ENCODE measurements at regions of chr20 and their contacts with region 1.

Region 1: DNA sequence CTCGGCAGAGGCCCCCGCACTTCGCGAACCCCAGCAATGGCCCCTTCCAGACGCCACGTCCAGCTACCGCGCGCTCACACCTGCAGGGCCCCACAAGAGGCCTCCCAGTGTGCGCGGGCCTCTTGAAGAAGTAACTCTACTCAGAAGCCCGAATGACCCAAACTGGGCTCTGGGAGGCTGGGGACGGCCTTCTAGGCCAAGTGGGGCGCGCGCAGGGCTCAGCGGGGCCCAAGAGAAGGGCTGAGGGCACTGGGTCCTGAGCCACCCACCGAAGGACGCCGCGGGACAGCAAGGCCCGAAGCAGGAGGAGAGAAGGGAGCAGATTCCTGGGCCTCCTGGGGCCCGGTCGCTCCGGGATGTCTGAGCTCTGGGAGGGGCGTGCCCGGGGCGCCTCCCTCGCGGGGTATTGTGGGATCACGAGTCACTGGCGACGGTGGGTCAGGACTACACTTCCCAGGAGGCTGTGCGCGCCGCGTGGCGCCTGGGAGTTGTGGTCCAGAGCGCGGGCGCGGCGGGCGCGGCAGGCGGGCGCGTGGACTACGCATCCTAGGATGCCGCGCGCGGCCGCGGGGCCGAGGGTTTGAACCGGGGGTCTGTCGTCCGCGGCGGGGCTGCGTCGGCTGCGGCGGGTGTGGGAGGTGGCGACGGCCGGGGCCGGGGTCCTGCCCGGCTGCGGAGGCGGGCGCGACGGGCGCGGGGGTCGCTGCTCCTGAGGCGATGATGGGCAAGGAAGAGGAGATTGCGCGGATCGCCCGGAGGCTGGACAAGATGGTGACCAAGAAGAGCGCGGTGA is at the start of gene TCEA2:
- DNase-seq: peak; percentile 82 to 96 (median 90)
- ATAC-seq: peak; percentile 92 to 96 (median 94)
- H3K4me3 ChIP-seq: peak within 1 kb of the TSS; percentile 52 to 54
- H3K4me3 Mint-ChIP-seq: peak within 1 kb of the TSS; percentile 82 to 88 (median 84)
- H3K27ac ChIP-seq: peak within 1 kb of the TSS; percentile 44
- H3K27ac Mint-ChIP-seq: peak within 1 kb of the TSS; percentile 72 to 77
- H3K4me1 ChIP-seq: peaks cover 11 to 59% of the 10 kb centered on the region in 2 experiments
- H3K4me1 Mint-ChIP-seq: peaks cover 43 to 47% (median 46%) of the 10 kb centered on the region in 3 donors
- H3K27me3 ChIP-seq: peaks cover 0 to 3% of the 10 kb centered on the region in 2 experiments
- H3K27me3 Mint-ChIP-seq: no peaks in the 10 kb centered on the region
- total RNA-seq, gene TCEA2: 25.8 to 49.7 (median 40.1) TPM

Region 2: DNA sequence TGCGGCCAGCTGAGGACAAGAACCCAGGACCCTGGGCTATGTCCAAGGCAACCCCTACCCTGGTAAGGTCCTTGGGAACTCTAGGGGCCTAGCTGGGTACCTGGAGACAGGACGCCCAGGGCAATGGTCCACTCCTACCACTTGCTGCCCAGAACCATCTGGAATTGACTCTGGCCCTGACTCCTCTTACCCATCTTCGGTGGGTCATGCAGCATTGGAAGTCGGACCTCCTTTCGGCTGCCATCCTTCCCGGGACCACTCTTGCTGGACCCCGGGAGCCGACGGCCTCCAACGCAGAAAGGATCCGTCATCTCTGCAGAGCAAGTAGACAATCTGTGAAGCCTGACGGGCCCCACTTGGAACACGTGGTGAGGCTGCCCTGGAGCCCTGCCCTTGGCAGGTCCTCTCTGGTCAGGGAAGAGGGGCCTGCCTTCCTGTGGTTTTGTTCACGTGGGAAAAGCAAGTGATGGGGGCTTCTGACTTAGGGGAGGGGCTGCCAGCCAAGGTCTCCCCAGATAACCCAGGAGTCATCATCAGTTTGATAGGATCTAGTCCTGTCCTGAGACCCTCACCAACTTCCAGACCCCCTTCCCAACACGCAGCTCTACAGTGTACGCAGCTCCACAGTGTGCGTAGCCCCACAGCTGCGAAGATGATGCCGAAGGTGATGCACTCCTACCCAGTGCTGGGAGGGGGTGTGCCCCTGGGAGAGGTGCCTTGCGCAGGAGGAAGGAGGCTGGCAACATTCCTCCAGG is 95.0 kb before region 1 on chr20:
- CTCF ChIA-PET with region 1: no interaction called
- POLR2A ChIA-PET with region 1: no interaction called
- DNase-seq: no peak
- ATAC-seq: no peak
- H3K4me3 ChIP-seq: no peak overlapping the region
- H3K4me3 Mint-ChIP-seq: peak overlapping the region; percentile 76 to 89 (median 83)
- H3K27ac ChIP-seq: peak overlapping the region; percentile 57
- H3K27ac Mint-ChIP-seq: peak overlapping the region; percentile 85 to 87
- H3K4me1 ChIP-seq: peaks cover 5 to 22% of the 10 kb centered on the region in 2 experiments
- H3K4me1 Mint-ChIP-seq: peaks cover 12 to 18% (median 18%) of the 10 kb centered on the region in 3 donors
- H3K27me3 ChIP-seq: peaks cover 0 to 4% of the 10 kb centered on the region in 2 experiments
- H3K27me3 Mint-ChIP-seq: no peaks in the 10 kb centered on the region

Region 3: DNA sequence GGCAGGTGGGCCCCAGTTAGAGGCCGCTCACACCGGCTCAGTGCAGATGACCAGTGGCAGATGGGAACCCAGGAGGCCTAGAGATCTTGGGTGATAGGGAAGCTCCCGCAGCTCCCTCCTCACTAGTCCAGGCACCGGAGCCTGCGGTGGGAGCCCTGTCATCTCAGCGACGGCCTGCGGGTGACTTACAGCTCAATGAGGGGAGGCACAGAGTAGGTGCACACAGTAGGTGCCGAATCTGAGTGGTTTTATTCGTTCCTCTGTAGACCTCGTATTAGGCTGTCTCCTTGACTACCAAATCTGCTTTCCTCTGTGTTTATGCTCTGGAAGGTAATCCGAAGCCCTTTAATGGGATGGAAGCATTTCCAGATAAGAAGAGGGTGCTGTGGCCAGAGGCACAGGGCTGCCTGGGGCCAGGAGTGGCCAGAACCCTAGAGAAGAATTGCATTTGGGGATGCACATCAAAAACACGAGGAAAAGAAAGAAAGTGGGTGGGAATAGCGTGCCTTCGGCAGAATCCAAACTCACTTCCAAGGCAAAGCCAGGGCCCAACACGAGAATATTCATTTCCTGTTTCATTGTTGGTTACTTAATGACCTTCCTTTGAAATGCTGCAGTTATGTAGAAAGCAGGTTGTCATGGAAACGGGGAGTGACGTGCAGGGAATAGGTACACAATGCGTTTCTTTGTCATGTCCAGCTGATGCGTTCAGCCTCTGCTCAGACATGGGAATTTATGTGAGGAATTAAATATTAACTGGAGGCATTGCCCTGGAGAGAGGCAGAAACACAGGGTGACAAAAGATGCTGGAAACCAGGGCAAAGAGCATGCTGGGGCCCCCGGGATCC is 126.1 kb after region 1 on chr20:
- CTCF ChIA-PET with region 1: no interaction called
- POLR2A ChIA-PET with region 1: no interaction called
- DNase-seq: no peak
- ATAC-seq: no peak
- H3K4me3 ChIP-seq: no peak overlapping the region
- H3K4me3 Mint-ChIP-seq: no peak overlapping the region
- H3K27ac ChIP-seq: no peak overlapping the region
- H3K27ac Mint-ChIP-seq: no peak overlapping the region
- H3K4me1 ChIP-seq: peaks cover 0 to 8% of the 10 kb centered on the region in 2 experiments
- H3K4me1 Mint-ChIP-seq: peaks cover 3 to 27% (median 17%) of the 10 kb centered on the region in 3 donors
- H3K27me3 ChIP-seq: peaks cover 0 to 41% of the 10 kb centered on the region in 2 experiments
- H3K27me3 Mint-ChIP-seq: peaks cover 10 to 28% of the 10 kb centered on the region in 2 donors

Region 4: DNA sequence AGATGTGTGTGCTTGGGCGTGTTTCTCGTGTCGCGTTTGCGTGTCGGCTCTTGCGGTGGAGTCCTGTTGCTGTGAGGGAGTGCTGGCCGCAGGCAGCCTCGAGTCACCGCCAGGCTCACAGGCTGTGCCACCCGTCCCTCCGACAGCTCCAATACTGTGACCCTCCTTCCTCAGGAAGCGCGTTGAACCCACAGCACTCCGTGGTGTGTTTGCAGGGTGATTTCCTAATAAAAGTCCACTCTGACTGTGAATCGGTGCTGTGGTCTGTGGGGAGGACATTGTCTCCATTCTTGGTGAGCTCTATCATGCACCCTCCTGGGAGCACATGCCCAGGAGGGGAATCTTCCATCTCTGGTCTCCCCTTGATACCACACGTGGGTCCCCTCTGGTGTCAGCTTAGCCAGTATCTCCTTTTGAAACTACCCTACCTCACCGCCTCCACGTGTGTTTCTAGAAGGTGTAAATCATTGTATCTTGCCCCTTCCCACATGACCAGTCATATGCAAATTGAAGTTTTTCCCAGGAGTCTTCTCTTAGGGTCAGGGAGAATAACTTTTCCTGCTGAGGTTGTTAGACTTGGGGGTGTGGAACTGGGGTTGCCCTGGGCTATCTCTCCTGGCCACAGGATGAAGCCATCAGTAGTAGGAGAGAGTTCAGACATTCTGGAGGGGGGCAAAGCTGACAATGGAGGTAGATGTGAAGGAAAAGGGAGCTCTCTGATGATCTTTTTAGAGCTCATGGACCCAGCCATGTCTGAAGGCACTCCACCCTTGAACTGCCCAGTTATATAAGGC is 179.4 kb after region 1 on chr20:
- CTCF ChIA-PET with region 1: no interaction called
- POLR2A ChIA-PET with region 1: interaction called in 1 of 2 experiments, 17 read pairs
- DNase-seq: no peak
- ATAC-seq: no peak
- H3K4me3 ChIP-seq: no peak overlapping the region
- H3K4me3 Mint-ChIP-seq: no peak overlapping the region
- H3K27ac ChIP-seq: no peak overlapping the region
- H3K27ac Mint-ChIP-seq: no peak overlapping the region
- H3K4me1 ChIP-seq: peaks cover 2 to 13% of the 10 kb centered on the region in 2 experiments
- H3K4me1 Mint-ChIP-seq: peaks cover 0 to 11% (median 7%) of the 10 kb centered on the region in 3 donors
- H3K27me3 ChIP-seq: peaks cover 0 to 40% of the 10 kb centered on the region in 2 experiments
- H3K27me3 Mint-ChIP-seq: peaks cover 15 to 21% of the 10 kb centered on the region in 2 donors

Measured in T-cell (primary cell).